ENCODE measurements at regions of chr17 and their contacts with region 1.

Region 1: GRCh38 chr17:75289115-75289831 is at the start of gene SLC25A19:
- DNase-seq: peak; percentile 95 to 99 (median 97)
- H3K4me3 ChIP-seq: peak within 1 kb of the TSS; percentile 93 to 96
- H3K4me3 Mint-ChIP-seq: peak within 1 kb of the TSS; percentile 98 to 100 (median 100)
- H3K27ac ChIP-seq: peak within 1 kb of the TSS; percentile 79
- H3K27ac Mint-ChIP-seq: peak within 1 kb of the TSS; percentile 98 to 100 (median 100)
- H3K4me1 ChIP-seq: peaks cover 12% of the 10 kb centered on the region
- H3K4me1 Mint-ChIP-seq: peaks cover 4 to 31% (median 14%) of the 10 kb centered on the region in 4 donors
- H3K27me3 ChIP-seq: no peaks in the 10 kb centered on the region
- H3K27me3 Mint-ChIP-seq: no peaks in the 10 kb centered on the region
- total RNA-seq, gene SLC25A19: 19.8 to 21.8 TPM

Region 2: GRCh38 chr17:75046582-75047289 is 242.5 kb before region 1 on chr17 and contains the starts of genes ATP5PD and KCTD2:
- CTCF ChIA-PET with region 1: no interaction called
- POLR2A ChIA-PET with region 1: interaction called, 4 read pairs
- intact Hi-C with region 1: loop called (anchors 1 kb)
- DNase-seq: peak; percentile 92 to 95 (median 94)
- H3K4me3 ChIP-seq: peak within 1 kb of the TSS; percentile 62 to 96
- H3K4me3 Mint-ChIP-seq: peak within 1 kb of the TSS; percentile 95 to 100 (median 97)
- H3K27ac ChIP-seq: peak within 1 kb of the TSS; percentile 85
- H3K27ac Mint-ChIP-seq: peak within 1 kb of the TSS; percentile 96 to 98 (median 97)
- H3K4me1 ChIP-seq: peaks cover 30% of the 10 kb centered on the region
- H3K4me1 Mint-ChIP-seq: peaks cover 25 to 63% (median 40%) of the 10 kb centered on the region in 4 donors
- H3K27me3 ChIP-seq: no peaks in the 10 kb centered on the region
- H3K27me3 Mint-ChIP-seq: no peaks in the 10 kb centered on the region
- total RNA-seq, gene ATP5PD: 167 to 171 TPM
- total RNA-seq, gene KCTD2: 31.1 to 31.7 TPM

Region 3: GRCh38 chr17:75219815-75220214 is 69.5 kb before region 1 on chr17:
- CTCF ChIA-PET with region 1: no interaction called
- POLR2A ChIA-PET with region 1: no interaction called
- intact Hi-C with region 1: no loop called
- DNase-seq: no peak
- H3K4me3 ChIP-seq: no peak overlapping the region
- H3K4me3 Mint-ChIP-seq: no peak overlapping the region
- H3K27ac ChIP-seq: no peak overlapping the region
- H3K27ac Mint-ChIP-seq: peak overlapping the region in 3 of 7 donors; percentile 52 to 75 (median 52)
- H3K4me1 ChIP-seq: no peaks in the 10 kb centered on the region
- H3K4me1 Mint-ChIP-seq: peaks cover 0 to 3% (median 0%) of the 10 kb centered on the region in 4 donors
- H3K27me3 ChIP-seq: no peaks in the 10 kb centered on the region
- H3K27me3 Mint-ChIP-seq: no peaks in the 10 kb centered on the region

Region 4: GRCh38 chr17:75261336-75262111 is 27.7 kb before region 1 on chr17 and contains the starts of genes GGA3 and MRPS7:
- CTCF ChIA-PET with region 1: interaction called, 12 read pairs
- POLR2A ChIA-PET with region 1: interaction called, 84 read pairs
- intact Hi-C with region 1: loop called (anchors 1 kb)
- DNase-seq: peak; percentile 95 to 99 (median 97)
- H3K4me3 ChIP-seq: peak within 1 kb of the TSS; percentile 77 to 99
- H3K4me3 Mint-ChIP-seq: peak within 1 kb of the TSS; percentile 93 to 99 (median 97)
- H3K27ac ChIP-seq: peak within 1 kb of the TSS; percentile 96
- H3K27ac Mint-ChIP-seq: peak within 1 kb of the TSS; percentile 100
- H3K4me1 ChIP-seq: peaks cover 35% of the 10 kb centered on the region
- H3K4me1 Mint-ChIP-seq: peaks cover 32 to 65% (median 48%) of the 10 kb centered on the region in 4 donors
- H3K27me3 ChIP-seq: no peaks in the 10 kb centered on the region
- H3K27me3 Mint-ChIP-seq: no peaks in the 10 kb centered on the region
- total RNA-seq, gene GGA3: 121 to 122 TPM
- total RNA-seq, gene MRPS7: 34.1 to 36.3 TPM

Region 5: GRCh38 chr17:75319904-75320691 is 30.8 kb after region 1 on chr17:
- CTCF ChIA-PET with region 1: interaction called, 12 read pairs
- POLR2A ChIA-PET with region 1: interaction called, 11 read pairs
- intact Hi-C with region 1: no loop called
- DNase-seq: no peak
- H3K4me3 ChIP-seq: no peak overlapping the region
- H3K4me3 Mint-ChIP-seq: no peak overlapping the region
- H3K27ac ChIP-seq: no peak overlapping the region
- H3K27ac Mint-ChIP-seq: peak overlapping the region in 3 of 7 donors; percentile 2 to 32 (median 30)
- H3K4me1 ChIP-seq: peaks cover 10% of the 10 kb centered on the region
- H3K4me1 Mint-ChIP-seq: peaks cover 6 to 8% (median 7%) of the 10 kb centered on the region in 4 donors
- H3K27me3 ChIP-seq: no peaks in the 10 kb centered on the region
- H3K27me3 Mint-ChIP-seq: no peaks in the 10 kb centered on the region

Region 6: GRCh38 chr17:75412455-75413317 is 123.4 kb after region 1 on chr17:
- CTCF ChIA-PET with region 1: interaction called, 7 read pairs
- POLR2A ChIA-PET with region 1: interaction called, 7 read pairs
- intact Hi-C with region 1: loop called (anchors 1 kb)
- DNase-seq: peak; percentile 66 to 79 (median 77)
- H3K4me3 ChIP-seq: no peak overlapping the region
- H3K4me3 Mint-ChIP-seq: peak overlapping the region in 7 of 8 donors; percentile 0 to 68 (median 6)
- H3K27ac ChIP-seq: no peak overlapping the region
- H3K27ac Mint-ChIP-seq: peak overlapping the region in 5 of 7 donors; percentile 0 to 29 (median 3)
- H3K4me1 ChIP-seq: peaks cover 13% of the 10 kb centered on the region
- H3K4me1 Mint-ChIP-seq: peaks cover 7 to 16% (median 11%) of the 10 kb centered on the region in 4 donors
- H3K27me3 ChIP-seq: no peaks in the 10 kb centered on the region
- H3K27me3 Mint-ChIP-seq: peaks cover 5 to 6% of the 10 kb centered on the region in 2 donors

Region 7: GRCh38 chr17:75463603-75464002 is 174.3 kb after region 1 on chr17:
- CTCF ChIA-PET with region 1: no interaction called
- POLR2A ChIA-PET with region 1: no interaction called
- intact Hi-C with region 1: no loop called
- DNase-seq: no peak
- H3K4me3 ChIP-seq: no peak overlapping the region
- H3K4me3 Mint-ChIP-seq: no peak overlapping the region
- H3K27ac ChIP-seq: no peak overlapping the region
- H3K27ac Mint-ChIP-seq: peak overlapping the region in 2 of 7 donors; percentile 15 to 27
- H3K4me1 ChIP-seq: no peaks in the 10 kb centered on the region
- H3K4me1 Mint-ChIP-seq: peaks cover 17 to 32% (median 23%) of the 10 kb centered on the region in 4 donors
- H3K27me3 ChIP-seq: no peaks in the 10 kb centered on the region
- H3K27me3 Mint-ChIP-seq: no peaks in the 10 kb centered on the region

Measured in CD4-positive, alpha-beta memory T cell (primary cell).